Activated CD8-positive, alpha-beta T cell treated with anti-CD3 and anti-CD28 coated beads for 36 hours (primary cell): ENCODE measurements at regions of chr10 and their contacts with region 1.

Region 1: GRCh38 chr10:96831867-96832720 is at the start of gene LCOR:
- DNase-seq: peak; percentile 91
- ATAC-seq: peak; percentile 74
- H3K4me3 Mint-ChIP-seq: peak within 1 kb of the TSS; percentile 97
- H3K27ac Mint-ChIP-seq: peak within 1 kb of the TSS; percentile 97
- H3K4me1 Mint-ChIP-seq: peaks cover 49% of the 10 kb centered on the region
- H3K27me3 Mint-ChIP-seq: no peaks in the 10 kb centered on the region
- CTCF ChIP-seq: no peak
- total RNA-seq, gene LCOR: 20.6 to 24.3 TPM

Region 2: DNA sequence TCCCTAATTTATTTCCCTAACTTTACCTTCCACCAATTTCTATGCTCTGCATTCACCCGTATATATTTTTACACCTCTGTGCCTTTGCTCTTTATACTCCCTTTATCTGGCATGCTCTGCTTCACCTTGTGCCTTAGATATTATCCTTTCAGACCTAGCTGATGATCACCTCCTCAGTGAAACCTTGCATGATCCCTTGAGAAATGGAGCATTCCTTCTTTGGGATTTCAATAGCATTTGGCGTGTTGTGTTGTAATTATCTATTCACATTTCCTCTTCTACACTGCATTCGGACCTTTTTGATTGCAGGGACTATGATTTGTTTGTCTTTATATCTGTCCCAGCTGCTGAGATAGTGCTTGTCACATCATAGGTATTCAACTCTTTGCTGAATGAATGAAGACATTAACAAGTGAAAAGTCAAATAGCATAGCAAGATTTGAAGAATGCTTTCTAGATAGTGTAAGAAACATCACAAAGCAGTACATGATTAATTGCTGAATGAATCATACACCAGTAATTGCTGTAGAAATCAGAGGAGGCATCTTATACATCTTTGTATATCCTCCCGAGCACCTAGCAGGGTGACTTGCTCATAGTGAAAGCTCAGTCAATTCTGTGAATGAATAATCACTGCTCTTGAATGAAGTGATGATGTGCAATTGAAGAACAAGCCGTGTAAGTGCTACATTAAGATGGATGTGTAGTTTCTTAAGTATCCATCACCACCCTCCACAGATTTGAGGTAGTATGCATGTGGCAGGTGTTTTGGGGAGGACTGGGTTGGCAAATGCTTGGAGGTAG is 243.3 kb before region 1 on chr10:
- CTCF ChIA-PET with region 1: no interaction called
- POLR2A ChIA-PET with region 1: no interaction called
- intact Hi-C with region 1: no loop called
- DNase-seq: peak; percentile 59
- ATAC-seq: peak; percentile 71
- H3K4me3 Mint-ChIP-seq: no peak overlapping the region
- H3K27ac Mint-ChIP-seq: no peak overlapping the region
- H3K4me1 Mint-ChIP-seq: peaks cover 24% of the 10 kb centered on the region
- H3K27me3 Mint-ChIP-seq: no peaks in the 10 kb centered on the region
- CTCF ChIP-seq: no peak

Region 3: GRCh38 chr10:96765406-96766240 is 66.5 kb before region 1 on chr10:
- CTCF ChIA-PET with region 1: interaction called, 5 read pairs
- POLR2A ChIA-PET with region 1: no interaction called
- intact Hi-C with region 1: loop called (anchors 2 kb)
- DNase-seq: peak; percentile 90
- ATAC-seq: peak; percentile 97
- H3K4me3 Mint-ChIP-seq: no peak overlapping the region
- H3K27ac Mint-ChIP-seq: no peak overlapping the region
- H3K4me1 Mint-ChIP-seq: no peaks in the 10 kb centered on the region
- H3K27me3 Mint-ChIP-seq: no peaks in the 10 kb centered on the region
- CTCF ChIP-seq: peak; percentile 93

Region 4: DNA sequence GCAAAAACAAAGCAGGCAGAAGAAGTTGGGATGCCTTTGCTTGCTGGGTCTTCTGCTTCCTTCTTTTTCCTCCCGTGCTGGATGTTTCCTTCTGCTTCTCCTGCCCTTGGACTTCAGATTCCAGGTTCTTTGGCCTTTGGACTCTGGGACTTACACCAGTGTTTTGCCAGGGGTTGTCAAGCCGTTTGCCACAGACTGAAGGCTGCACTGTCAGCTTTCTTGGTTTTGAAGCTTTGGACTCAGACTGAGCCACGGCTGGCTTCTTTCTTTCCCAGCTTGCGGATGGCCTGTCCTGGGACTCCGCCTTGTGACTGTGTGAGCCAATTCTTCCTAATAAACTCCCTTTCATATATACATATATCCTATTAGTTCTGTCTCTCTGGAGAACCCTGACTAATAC is 11.3 kb before region 1 on chr10:
- CTCF ChIA-PET with region 1: no interaction called
- POLR2A ChIA-PET with region 1: no interaction called
- intact Hi-C with region 1: no loop called
- DNase-seq: no peak
- ATAC-seq: no peak
- H3K4me3 Mint-ChIP-seq: no peak overlapping the region
- H3K27ac Mint-ChIP-seq: no peak overlapping the region
- H3K4me1 Mint-ChIP-seq: no peaks in the 10 kb centered on the region
- H3K27me3 Mint-ChIP-seq: no peaks in the 10 kb centered on the region
- CTCF ChIP-seq: no peak

Region 5: GRCh38 chr10:96878057-96878456 is 46.0 kb after region 1 on chr10:
- CTCF ChIA-PET with region 1: no interaction called
- POLR2A ChIA-PET with region 1: no interaction called
- intact Hi-C with region 1: no loop called
- DNase-seq: no peak
- ATAC-seq: no peak
- H3K4me3 Mint-ChIP-seq: no peak overlapping the region
- H3K27ac Mint-ChIP-seq: no peak overlapping the region
- H3K4me1 Mint-ChIP-seq: peaks cover 56% of the 10 kb centered on the region
- H3K27me3 Mint-ChIP-seq: no peaks in the 10 kb centered on the region
- CTCF ChIP-seq: no peak

Region 6: DNA sequence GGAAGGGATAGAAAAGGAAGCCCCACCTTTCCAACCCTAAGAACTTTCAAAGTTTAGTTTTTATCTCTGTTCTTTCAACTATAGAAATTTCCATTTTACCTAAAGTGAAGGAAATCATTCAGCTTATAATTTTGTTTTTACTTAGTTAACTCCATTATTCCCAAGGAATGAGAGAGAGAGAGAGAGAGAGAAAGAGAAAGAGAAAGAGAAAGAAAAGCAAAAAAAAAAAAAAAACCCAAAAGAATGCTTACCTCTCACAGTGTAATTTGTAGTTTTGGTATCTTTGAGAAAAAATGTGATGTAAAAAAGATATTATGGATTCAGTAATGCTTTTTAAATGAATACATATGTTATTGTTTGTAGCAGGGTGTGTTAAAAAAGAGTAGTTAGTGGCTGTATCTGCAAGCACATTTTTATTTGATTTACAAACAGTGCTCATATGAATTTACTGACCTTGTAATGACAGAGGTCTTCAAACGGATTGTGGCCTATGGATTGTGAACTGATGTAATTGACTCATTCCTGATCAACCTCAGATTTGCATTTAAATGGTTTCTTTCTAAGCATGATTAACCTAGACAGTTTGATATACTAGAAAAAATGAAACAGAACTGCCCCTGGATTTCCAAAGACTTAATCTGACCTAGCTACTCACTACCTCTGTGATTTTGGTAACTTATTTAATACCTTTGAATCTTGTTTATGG is 64.9 kb after region 1 on chr10:
- CTCF ChIA-PET with region 1: no interaction called
- POLR2A ChIA-PET with region 1: no interaction called
- intact Hi-C with region 1: loop called (anchors 5 kb)
- DNase-seq: no peak
- ATAC-seq: peak; percentile 74
- H3K4me3 Mint-ChIP-seq: no peak overlapping the region
- H3K27ac Mint-ChIP-seq: peak overlapping the region; percentile 46
- H3K4me1 Mint-ChIP-seq: peaks cover 53% of the 10 kb centered on the region
- H3K27me3 Mint-ChIP-seq: no peaks in the 10 kb centered on the region
- CTCF ChIP-seq: no peak